ENCODE measurements at regions of chr16 and their contacts with region 1.

Region 1: GRCh38 chr16:55257966-55258613 is 65.9 kb upstream of the IRX6 start:
- DNase-seq: peak; percentile 46
- H3K4me3 ChIP-seq: no peak overlapping the region
- H3K27ac ChIP-seq: no peak overlapping the region
- H3K4me1 ChIP-seq: no peaks in the 10 kb centered on the region
- H3K27me3 ChIP-seq: no peaks in the 10 kb centered on the region
- CTCF ChIP-seq: peak; percentile 91 to 95

Region 2: DNA sequence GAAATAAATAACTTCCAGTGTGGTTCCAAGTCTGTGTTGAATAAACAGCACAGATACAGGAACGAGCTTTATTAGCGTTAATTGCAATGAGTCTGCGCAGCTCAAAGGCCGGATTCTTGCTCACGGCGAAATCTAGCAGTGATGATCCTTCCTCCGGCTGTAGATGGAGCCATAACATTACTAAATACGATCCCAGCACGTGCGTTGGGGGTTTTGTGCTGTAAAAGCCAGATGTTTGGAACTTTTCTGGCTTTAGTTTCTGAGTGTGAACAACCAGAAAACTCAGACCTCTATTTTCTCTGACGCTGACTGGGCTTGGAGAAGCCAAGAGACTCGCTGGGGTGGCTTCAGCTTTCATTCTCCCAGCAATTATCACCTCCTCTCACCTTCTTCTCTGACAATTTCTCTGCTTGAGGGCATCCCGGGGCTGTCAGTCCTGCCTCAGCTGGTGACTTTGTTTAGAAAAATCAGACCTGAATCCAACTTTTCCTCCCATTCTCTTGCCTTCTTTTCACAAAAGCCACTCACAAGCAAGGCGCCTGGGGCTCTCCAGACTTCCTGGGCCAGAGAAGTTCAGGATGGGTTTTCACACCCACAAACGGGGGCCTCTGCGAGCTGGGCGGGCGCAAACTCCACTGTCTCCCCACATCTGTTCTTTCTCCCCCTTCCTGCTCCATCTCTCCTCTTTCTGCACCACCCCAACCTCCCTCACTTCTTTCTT is 1708.0 kb before region 1 on chr16:
- CTCF ChIA-PET with region 1: no interaction called
- dilution Hi-C with region 1: no loop called
- in situ Hi-C with region 1: no loop called
- intact Hi-C with region 1: loop called (anchors 1 kb)
- DNase-seq: peak; percentile 60
- H3K4me3 ChIP-seq: no peak overlapping the region
- H3K27ac ChIP-seq: no peak overlapping the region
- H3K4me1 ChIP-seq: no peaks in the 10 kb centered on the region
- H3K27me3 ChIP-seq: no peaks in the 10 kb centered on the region
- CTCF ChIP-seq: peak; percentile 72 to 76

Region 3: DNA sequence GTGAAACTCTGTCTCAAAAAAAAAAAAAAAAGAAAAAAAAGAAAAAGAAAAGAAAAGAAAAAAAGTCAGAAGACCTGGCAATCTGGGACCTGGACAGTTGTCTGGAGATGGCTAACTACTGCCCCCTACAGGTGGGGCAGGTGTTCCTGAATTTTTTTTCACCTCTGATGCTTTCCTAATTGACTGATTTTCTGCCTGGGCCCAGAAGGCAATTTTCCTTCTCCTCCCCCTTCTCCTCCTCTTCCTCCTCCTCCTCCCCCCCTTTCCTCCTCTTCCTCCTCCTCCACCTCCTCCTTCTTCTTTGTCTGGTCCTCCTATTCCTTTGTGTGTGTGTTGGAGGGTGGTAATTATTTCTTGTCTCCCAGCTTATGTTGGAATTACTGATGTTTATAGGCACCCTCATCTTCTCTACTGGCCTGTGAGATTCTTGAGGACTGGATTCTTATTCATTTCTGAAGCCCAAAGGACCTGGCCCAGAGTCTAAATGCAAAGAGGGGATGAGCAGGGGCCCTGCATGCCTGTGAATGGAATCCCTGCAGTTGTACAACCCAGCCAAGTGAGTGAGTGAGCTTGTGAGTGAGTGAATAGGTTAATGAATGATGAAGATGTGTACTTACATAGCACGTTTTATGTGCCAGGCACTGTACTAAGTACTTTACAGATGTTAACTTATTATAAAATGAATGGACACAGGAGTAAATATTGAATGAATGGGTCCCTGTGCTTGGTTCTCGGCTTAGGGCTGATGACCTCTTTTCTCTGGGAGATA is 300.5 kb before region 1 on chr16:
- CTCF ChIA-PET with region 1: interaction called, 4 read pairs
- dilution Hi-C with region 1: no loop called
- in situ Hi-C with region 1: no loop called
- intact Hi-C with region 1: loop called (anchors 2 kb)
- DNase-seq: peak; percentile 43
- H3K4me3 ChIP-seq: no peak overlapping the region
- H3K27ac ChIP-seq: no peak overlapping the region
- H3K4me1 ChIP-seq: no peaks in the 10 kb centered on the region
- H3K27me3 ChIP-seq: no peaks in the 10 kb centered on the region
- CTCF ChIP-seq: peak; percentile 68 to 82

Region 4: DNA sequence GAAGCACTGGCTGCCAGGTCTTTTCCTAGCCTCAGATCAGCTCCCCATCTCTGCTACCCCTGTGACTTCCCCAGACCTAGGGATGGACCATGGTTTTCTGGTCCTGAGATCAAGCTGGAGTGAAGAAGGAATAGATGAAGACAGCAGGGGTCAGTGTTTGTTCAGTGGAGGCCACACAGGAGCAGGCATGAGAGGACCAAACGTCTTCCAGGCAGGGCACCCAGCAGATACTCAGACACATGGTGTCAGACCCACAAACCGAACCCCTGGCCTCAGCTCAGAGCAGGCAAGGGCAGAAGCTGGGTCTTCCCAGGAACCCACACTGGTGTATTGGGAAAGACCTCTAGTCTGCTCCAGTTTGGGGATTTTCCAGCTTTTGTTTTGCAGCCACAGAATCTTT is 137.7 kb before region 1 on chr16:
- CTCF ChIA-PET with region 1: no interaction called
- dilution Hi-C with region 1: no loop called
- in situ Hi-C with region 1: no loop called
- intact Hi-C with region 1: loop called (anchors 1 kb)
- DNase-seq: peak; percentile 16
- H3K4me3 ChIP-seq: no peak overlapping the region
- H3K27ac ChIP-seq: no peak overlapping the region
- H3K4me1 ChIP-seq: peaks cover 3% of the 10 kb centered on the region
- H3K27me3 ChIP-seq: no peaks in the 10 kb centered on the region
- CTCF ChIP-seq: peak in 1 of 2 donors; percentile 40

Region 5: DNA sequence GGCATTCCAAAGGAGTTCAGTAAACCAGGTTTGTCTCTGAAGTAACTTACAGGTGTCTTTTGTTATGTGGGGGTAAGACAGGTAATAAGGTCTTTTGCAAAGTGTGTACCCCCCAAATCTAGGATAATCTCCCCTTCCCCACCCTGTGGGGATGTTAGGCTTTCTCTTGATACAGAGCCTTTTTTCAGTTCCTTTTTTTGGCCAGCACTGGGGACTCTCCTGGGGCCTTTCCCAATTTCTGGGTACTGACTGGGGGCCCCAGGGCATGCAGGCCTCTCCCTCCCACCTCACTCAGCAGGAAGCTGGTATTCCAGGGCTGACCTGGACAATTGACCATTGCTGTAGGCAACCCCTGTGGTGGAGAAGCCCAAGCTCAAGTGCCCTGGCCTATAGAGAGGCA is 18.4 kb before region 1 on chr16:
- CTCF ChIA-PET with region 1: no interaction called
- dilution Hi-C with region 1: no loop called
- in situ Hi-C with region 1: no loop called
- intact Hi-C with region 1: no loop called
- DNase-seq: no peak
- H3K4me3 ChIP-seq: no peak overlapping the region
- H3K27ac ChIP-seq: no peak overlapping the region
- H3K4me1 ChIP-seq: no peaks in the 10 kb centered on the region
- H3K27me3 ChIP-seq: no peaks in the 10 kb centered on the region
- CTCF ChIP-seq: no peak

Region 6: GRCh38 chr16:55370762-55371482 is 112.8 kb after region 1 on chr16:
- CTCF ChIA-PET with region 1: no interaction called
- dilution Hi-C with region 1: no loop called
- in situ Hi-C with region 1: no loop called
- intact Hi-C with region 1: loop called (anchors 2 kb)
- DNase-seq: peak; percentile 42
- H3K4me3 ChIP-seq: no peak overlapping the region
- H3K27ac ChIP-seq: no peak overlapping the region
- H3K4me1 ChIP-seq: peaks cover 17% of the 10 kb centered on the region
- H3K27me3 ChIP-seq: no peaks in the 10 kb centered on the region
- CTCF ChIP-seq: peak; percentile 42 to 71

Measured in mammary epithelial cell (primary cell).